GM13976 (cell line): ENCODE measurements at regions of chr12 and their contacts with region 1.

Region 1: DNA sequence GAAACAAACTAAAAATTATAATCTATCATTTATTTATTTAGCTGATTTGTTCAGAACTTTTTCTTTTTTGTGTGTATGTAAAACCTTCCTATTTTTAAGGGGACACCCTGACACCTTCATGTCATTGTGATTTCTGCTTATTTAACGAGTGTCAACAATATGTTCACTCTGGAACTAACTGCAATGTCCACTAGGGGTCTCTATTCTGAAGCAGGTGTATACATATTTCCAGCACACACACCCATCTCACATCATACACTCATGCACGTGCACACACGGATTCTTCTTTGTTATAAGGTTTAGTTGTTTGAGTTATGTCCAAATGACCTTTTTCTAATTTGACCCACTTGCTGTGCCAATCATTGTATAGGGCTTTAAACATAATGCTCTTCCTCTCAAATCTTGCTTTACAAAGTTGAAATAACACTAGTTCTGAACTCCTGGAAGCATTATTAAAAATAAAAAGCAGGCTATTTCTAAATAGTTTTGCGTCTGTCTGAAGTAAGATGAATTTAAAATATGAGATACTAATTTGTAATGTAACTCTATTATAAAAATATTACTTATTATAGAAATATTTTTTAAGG is 15.5 kb downstream of the E2F7 start:
- DNase-seq: peak; percentile 41
- CTCF ChIP-seq: peak; percentile 75

Region 2: DNA sequence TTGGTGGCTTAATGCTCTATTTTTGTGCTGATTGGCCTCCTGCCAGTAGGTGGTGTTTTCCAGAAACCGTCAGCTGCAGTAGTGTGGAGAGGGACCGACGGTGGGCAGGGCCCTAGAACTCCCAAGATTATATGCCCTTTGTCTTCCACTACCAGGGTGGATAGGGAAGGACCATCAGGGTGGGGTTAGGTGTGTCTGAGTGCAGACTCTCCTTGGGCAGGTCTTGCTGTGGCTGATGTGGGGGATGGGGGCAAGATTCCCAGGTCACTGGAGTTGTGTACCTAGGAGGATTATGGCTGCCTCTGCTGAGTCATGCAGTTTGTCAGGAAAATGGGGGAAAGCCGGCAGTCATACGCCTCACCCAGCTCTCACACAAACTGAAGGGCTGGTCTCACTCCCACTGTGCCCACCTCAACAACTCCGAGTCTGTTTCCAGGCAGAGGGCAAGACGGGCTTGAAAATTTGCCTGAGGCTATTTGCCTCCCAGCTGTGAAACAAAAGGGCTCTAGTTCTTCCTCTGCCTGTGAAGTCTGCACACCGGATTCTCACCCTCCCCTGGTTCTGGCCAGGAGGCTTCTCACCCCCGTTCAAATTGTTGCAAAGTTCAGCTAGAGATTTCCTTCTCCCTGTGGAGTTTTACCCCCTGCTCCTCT is 310.8 kb before region 1 on chr12:
- in situ Hi-C with region 1: no loop called
- DNase-seq: no peak
- CTCF ChIP-seq: no peak

Region 3: GRCh38 chr12:77324763-77325468 is 275.1 kb after region 1 on chr12:
- in situ Hi-C with region 1: loop called (anchors 25 kb)
- DNase-seq: peak; percentile 84
- CTCF ChIP-seq: peak; percentile 72

Region 4: DNA sequence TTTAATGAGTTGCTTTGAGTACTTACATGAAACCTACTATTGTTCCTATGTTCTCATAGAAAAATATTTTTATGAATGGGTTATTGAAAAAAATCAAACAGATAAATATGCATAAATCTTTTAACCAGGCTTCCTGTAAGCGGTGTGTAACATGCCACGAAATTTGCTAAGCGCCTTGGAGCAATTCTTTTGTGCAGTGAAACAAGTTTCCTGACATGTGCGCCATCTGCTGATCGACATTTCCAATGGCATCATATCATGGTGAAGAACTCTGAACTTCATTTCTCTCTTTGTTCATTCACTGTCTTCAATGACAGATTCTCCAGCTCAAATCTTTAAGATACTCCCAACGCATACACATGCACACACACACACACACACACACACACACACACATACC is 635.3 kb after region 1 on chr12:
- in situ Hi-C with region 1: loop called (anchors 25 kb)
- DNase-seq: peak; percentile 3
- CTCF ChIP-seq: peak; percentile 34